Dendritic cell treated with granulocyte-macrophage colony-stimulating factor and Interleukin-4, amounts not matched to agents 40 ng/mL and 50 ng/mL, for 4 days (primary cell): ENCODE measurements at regions of chr11 and their contacts with region 1.

Region 1: GRCh38 chr11:66677599-66678375 is at the start of gene RBM4B:
- H3K4me3 Mint-ChIP-seq: peak within 1 kb of the TSS; percentile 86
- H3K27ac Mint-ChIP-seq: peak within 1 kb of the TSS; percentile 91
- H3K4me1 Mint-ChIP-seq: peaks cover 34% of the 10 kb centered on the region
- H3K27me3 Mint-ChIP-seq: no peaks in the 10 kb centered on the region

Region 2: DNA sequence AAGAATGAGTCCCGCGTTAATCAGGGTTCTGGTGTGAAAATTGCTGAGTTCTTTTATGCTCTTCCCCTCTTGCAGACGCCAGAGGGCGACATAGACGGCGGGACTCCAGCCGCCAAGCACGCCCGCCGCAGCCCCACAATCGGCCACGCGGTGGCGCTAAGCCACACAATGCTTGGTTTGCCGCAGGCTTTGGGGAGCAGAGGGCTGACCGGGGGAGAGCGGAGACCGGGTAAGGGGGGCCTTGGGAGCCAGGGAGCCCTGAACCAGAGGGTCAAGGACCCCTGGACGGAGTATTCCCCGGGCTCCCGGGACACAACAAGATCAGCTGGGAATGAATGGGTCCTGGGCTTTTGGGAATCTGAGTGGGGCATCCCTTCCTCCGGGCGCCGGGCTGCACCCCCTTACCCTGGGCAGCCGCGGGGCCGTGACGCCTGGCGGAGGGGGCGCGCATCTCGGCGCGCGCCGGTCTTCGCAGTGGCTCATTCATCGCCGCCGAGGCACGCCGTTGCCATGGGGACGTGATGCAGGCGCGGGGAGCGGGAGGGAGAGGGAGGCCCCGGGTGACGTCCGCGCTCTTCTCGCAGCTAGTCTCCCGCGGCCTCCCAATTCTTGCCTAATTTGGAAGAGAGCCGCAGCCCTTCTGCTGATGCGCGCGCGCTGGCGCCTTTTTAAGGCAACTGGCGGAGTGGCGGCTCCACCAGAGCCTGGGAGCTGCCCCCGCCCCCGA is 269.1 kb before region 1 on chr11:
- intact Hi-C with region 1: loop called (anchors 1 kb)
- H3K4me3 Mint-ChIP-seq: peak overlapping the region; percentile 58
- H3K27ac Mint-ChIP-seq: no peak overlapping the region
- H3K4me1 Mint-ChIP-seq: no peaks in the 10 kb centered on the region
- H3K27me3 Mint-ChIP-seq: peaks cover 53% of the 10 kb centered on the region

Region 3: GRCh38 chr11:66545701-66546367 is 132.0 kb before region 1 on chr11 and contains the start of gene ZDHHC24:
- intact Hi-C with region 1: loop called (anchors 1 kb)
- H3K4me3 Mint-ChIP-seq: peak within 1 kb of the TSS; percentile 79
- H3K27ac Mint-ChIP-seq: peak within 1 kb of the TSS; percentile 76
- H3K4me1 Mint-ChIP-seq: peaks cover 41% of the 10 kb centered on the region
- H3K27me3 Mint-ChIP-seq: peaks cover 35% of the 10 kb centered on the region

Region 4: DNA sequence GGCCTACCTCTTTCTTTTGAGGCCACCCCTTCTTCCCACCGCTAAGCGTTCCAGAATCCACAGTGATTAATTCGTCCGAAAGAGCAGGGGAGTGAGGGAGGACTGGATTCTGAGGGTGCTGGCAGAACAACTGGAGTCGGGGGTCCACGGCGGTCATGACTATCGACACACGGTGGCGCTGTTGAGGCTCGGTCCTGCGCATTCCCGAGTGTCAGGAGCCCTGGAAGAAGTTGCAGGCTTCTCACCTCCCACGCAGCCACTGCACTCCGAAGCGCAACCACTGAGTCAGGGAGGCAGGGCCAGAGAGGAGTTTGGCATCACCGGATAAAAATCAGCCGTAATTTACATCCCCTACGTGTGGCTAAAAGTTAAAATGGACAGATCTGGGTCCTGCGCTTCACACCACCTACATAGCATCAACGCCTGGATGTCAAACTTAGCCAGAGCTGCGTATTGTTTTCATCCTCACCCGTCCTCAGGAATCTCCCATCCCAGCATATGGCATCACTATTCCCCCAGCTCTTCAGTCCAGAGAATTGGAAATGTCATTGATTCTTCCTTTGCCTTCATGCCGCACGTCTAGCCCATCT is 98.7 kb before region 1 on chr11:
- intact Hi-C with region 1: loop called (anchors 1 kb)
- H3K4me3 Mint-ChIP-seq: no peak overlapping the region
- H3K27ac Mint-ChIP-seq: no peak overlapping the region
- H3K4me1 Mint-ChIP-seq: peaks cover 11% of the 10 kb centered on the region
- H3K27me3 Mint-ChIP-seq: peaks cover 20% of the 10 kb centered on the region

Region 5: DNA sequence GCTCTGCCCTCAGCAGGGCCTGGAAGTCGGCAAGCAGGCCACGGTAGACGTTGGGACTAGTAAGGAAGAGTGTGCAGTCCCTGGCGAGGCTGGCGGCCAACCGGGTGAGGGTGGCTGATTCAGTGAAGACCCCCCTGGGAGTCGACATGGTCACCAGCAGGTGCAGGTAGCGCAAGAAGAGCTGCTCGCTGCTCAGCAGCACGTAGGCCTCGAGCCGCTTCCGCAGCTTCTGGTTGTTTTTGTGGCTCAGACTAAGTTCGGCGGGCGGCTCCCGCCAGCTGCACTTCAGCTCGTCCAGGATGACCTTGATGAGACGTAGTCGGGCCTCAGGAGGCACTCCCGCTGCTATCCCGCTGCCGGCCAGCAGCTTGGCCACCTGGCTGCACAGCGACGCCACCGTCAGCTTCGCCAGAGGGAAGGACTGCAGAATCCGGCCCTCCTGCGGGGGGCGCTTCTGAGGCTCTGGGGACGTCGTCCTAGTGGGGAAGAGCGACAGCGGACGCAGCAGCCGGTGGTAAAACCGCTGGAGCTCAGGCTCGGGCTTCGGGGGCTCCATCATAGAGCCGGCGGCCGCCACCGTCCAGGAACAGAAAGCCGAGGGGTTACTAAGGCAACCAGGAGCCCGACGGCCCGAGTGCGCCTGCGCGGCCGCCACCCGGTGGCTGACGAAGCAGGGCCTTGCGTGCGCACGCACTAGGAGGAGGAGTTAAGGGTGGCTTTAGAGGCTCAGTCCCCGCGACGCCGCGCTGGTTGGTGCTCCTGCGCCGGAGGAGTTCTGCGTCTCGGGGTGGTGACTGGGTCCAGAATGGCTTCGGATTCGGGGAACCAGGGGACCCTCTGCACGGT is 85.1 kb before region 1 on chr11 and contains the starts of genes CCDC87 and CCS:
- intact Hi-C with region 1: loop called (anchors 1 kb)
- H3K4me3 Mint-ChIP-seq: peak within 1 kb of the TSS; percentile 98
- H3K27ac Mint-ChIP-seq: peak within 1 kb of the TSS; percentile 91
- H3K4me1 Mint-ChIP-seq: peaks cover 32% of the 10 kb centered on the region
- H3K27me3 Mint-ChIP-seq: peaks cover 3% of the 10 kb centered on the region

Region 6: DNA sequence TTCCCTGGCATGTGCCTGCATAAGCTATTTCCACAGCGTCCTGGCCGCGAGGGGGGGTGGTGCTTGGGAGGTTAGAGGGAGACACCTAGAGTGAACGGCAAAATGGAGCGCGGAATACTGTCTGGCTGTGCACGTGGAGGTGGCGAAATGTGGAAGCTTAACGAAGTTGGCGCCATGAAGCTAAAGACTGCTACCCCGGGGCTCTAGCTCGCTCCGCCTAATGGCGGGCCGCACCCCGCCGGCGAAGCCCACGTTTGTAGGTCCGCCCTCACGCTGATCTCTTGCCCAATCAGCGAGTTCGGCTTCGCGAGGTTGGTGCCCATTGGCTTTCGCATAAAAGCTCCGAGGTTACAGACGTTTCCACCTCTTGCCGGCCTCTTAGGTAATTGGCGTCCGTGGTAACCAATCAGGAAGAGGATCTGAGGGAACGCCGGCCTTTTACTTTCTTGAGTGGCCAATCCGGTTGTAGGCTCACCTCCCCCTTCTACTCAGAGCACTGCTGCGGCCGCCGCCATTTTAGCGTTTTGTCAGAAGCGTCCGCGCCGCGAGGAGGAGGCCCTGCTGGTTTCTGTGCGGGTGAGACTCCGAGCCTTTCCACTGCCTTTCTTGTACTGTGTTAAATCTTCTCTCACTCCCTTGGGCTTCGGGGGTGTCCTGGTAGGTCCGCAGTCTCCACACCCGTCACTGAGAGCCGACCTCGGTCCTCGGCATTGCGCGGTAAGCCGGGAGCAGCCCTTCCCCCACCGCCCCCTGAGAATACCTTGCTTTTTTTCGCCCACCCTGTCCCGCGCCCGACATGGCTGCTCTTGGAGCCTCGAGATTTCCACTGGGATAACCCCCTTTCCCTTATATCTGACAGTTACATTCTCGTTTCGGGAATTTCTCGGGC is 39.4 kb before region 1 on chr11 and contains the start of gene RBM4:
- intact Hi-C with region 1: loop called (anchors 5 kb)
- H3K4me3 Mint-ChIP-seq: peak within 1 kb of the TSS; percentile 96
- H3K27ac Mint-ChIP-seq: peak within 1 kb of the TSS; percentile 97
- H3K4me1 Mint-ChIP-seq: peaks cover 70% of the 10 kb centered on the region
- H3K27me3 Mint-ChIP-seq: no peaks in the 10 kb centered on the region